ENCODE measurements at regions of chr7 and their contacts with region 1.

Region 1: DNA sequence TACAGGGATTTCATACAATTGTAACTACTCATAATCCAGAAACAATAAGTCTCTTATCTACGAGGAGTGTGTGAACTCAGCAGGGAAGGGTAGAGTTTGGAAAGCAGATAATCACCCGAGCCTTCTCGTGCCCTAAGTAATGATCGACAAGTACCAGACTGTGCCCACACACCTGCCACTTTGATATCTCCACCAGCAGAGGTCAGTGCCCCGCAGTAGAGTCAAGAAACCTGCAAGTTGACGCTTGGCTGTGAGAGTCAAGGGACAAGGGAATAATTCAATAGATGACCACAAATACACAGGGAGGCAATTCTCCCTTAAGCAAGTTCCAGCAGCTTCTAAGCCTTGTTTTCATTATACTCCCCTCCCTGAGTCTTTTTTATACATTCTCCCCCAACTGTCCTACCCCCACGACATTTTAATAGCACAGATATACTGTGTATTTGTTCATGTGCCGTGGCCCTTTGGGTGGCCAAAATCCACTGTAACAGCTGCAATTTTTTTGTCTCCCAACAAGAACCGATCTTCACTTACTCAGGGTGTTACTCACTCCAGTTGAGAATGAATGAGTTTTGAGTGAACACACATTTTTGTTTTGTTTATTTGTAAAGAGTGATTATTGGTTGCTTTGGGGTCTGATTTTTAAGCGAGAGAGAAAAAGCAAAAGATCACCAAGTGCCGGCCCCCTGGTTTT is 106.9 kb upstream of the RHEB start:
- DNase-seq: peak; percentile 45
- H3K4me3 Mint-ChIP-seq: no peak overlapping the region
- H3K27ac Mint-ChIP-seq: no peak overlapping the region
- H3K4me1 Mint-ChIP-seq: peaks cover 31% of the 10 kb centered on the region
- H3K27me3 Mint-ChIP-seq: no peaks in the 10 kb centered on the region

Region 2: DNA sequence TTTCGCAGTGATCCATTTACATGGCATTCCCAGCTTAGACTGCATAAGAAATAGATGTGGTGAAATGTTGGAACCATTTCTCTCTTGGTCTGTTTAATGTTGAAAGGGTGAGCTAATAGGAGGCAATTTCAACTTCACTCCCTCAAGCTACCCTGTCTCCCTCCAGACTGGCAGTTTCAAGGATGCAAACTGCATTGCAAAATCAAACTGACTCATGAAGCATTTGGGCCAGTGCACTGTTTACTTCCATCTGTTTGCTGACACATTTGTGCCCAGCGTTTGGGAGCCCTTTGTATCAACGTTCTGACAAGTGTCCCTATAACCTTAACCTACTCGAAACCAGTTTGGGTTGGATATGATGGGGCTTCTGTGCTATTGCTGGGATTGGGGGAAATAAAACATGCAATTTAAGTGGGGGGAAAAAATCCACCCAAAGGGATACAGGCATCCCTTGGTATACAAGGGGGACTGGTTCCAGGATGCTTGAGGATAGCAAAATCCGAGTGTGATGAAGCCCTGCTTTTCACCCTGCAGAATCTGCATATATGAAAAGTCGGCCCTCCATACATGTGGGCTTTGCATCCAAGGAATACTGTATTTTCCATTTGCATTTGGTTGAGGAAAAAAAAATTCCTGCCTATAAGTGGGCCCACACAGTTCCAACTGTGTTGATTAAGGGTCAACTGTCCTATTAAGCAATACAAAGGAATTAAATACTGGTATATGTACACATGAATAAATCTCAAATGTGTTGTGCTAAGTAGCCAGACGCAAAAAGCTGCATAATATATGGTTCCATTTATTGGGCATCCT is 122.5 kb before region 1 on chr7:
- CTCF ChIA-PET with region 1: no interaction called
- POLR2A ChIA-PET with region 1: no interaction called
- intact Hi-C with region 1: no loop called
- DNase-seq: no peak
- H3K4me3 Mint-ChIP-seq: no peak overlapping the region
- H3K27ac Mint-ChIP-seq: no peak overlapping the region
- H3K4me1 Mint-ChIP-seq: peaks cover 59% of the 10 kb centered on the region
- H3K27me3 Mint-ChIP-seq: no peaks in the 10 kb centered on the region

Region 3: GRCh38 chr7:151705636-151706276 is 79.2 kb after region 1 on chr7:
- CTCF ChIA-PET with region 1: no interaction called
- POLR2A ChIA-PET with region 1: no interaction called
- intact Hi-C with region 1: loop called (anchors 1 kb)
- DNase-seq: peak; percentile 35
- H3K4me3 Mint-ChIP-seq: no peak overlapping the region
- H3K27ac Mint-ChIP-seq: no peak overlapping the region
- H3K4me1 Mint-ChIP-seq: peaks cover 2% of the 10 kb centered on the region
- H3K27me3 Mint-ChIP-seq: no peaks in the 10 kb centered on the region

Measured in activated CD4-positive, alpha-beta memory T cell treated with anti-CD3 and anti-CD28 coated beads for 36 hours (primary cell).